ENCODE measurements at regions of chr6 and their contacts with region 1.

Region 1: DNA sequence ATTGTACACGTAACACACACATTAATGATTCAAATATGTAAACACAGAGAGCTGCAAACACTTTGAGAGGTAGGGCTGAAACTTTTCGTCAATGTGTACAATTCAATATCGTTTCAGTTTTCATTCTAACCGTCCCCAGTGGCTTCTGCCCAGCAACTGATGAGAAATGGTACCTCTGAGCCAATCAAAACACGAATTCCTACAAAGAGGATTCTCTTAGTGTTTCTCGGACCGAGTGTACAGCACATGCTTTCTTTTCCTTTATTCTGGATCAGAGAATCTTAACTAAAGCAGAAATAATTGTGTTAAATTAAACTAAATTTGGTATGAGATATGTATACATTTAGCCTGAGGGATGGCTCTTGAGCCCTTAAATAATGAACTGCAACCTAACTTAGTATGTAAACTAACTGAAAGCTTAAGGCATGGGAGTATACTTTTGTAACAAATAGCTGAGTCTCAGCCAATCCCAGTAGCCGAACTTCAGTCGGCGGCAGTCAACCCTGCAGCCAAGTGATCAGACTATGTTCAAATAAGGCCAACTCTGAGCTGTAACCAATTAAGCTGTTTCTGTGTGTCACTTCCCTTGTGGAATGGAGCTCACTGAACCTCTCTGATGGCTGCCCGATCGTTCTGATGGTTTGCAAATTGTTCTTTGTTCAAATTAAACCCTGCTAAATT is 16.1 kb downstream of the BTN2A1 start:
- DNase-seq: peak; percentile 63 to 96 (median 79)
- ATAC-seq: peak; percentile 93
- H3K4me3 ChIP-seq: peak overlapping the region; percentile 64 to 75
- H3K4me3 Mint-ChIP-seq: peak overlapping the region; percentile 93
- H3K27ac ChIP-seq: peak overlapping the region; percentile 82 to 98
- H3K27ac Mint-ChIP-seq: peak overlapping the region; percentile 99
- H3K4me1 ChIP-seq: peaks cover 39% of the 10 kb centered on the region
- H3K4me1 Mint-ChIP-seq: peaks cover 50% of the 10 kb centered on the region
- H3K27me3 ChIP-seq: no peaks in the 10 kb centered on the region
- H3K27me3 Mint-ChIP-seq: no peaks in the 10 kb centered on the region
- CTCF ChIP-seq: no peak

Region 2: DNA sequence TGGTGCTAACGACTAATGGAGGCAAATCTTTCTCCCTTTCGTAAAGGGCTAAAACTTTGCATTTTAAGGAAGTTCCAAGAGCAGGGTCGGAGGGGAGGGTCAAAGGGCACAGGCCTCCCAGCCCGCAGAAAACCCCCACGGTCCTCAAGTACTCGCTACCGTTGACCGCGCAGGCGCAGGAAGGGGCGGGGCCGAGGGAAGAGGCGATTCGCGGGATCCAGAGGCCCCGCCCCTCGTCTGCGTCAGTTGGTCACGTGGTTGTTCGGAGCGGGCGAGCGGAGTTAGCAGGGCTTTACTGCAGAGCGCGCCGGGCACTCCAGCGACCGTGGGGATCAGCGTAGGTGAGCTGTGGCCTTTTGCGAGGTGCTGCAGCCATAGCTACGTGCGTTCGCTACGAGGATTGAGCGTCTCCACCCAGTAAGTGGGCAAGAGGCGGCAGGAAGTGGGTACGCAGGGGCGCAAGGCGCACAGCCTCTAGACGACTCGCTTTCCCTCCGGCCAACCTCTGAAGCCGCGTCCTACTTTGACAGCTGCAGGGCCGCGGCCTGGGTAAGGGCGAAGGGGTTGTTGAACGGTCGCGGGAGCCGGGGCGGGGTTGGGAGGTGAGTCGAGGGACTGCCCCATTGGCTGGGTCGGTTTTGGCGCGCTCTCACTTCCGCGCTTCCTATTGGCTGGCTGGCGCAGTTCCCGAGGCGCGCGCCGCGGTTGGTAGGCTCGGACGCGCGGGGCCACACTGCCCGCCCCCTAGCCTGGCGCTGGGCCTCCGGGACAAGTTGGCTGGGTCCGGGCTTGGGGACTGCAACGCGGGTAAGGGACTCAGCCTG is 1699.0 kb before region 1 on chr6 and contains the start of gene GMNN:
- CTCF ChIA-PET with region 1: no interaction called
- POLR2A ChIA-PET with region 1: no interaction called
- intact Hi-C with region 1: no loop called
- DNase-seq: peak; percentile 93 to 99 (median 98)
- ATAC-seq: peak; percentile 86
- H3K4me3 ChIP-seq: peak within 1 kb of the TSS; percentile 86 to 94
- H3K4me3 Mint-ChIP-seq: peak within 1 kb of the TSS; percentile 99
- H3K27ac ChIP-seq: peak within 1 kb of the TSS; percentile 83 to 85
- H3K27ac Mint-ChIP-seq: peak within 1 kb of the TSS; percentile 97
- H3K4me1 ChIP-seq: peaks cover 14% of the 10 kb centered on the region
- H3K4me1 Mint-ChIP-seq: peaks cover 22% of the 10 kb centered on the region
- H3K27me3 ChIP-seq: no peaks in the 10 kb centered on the region
- H3K27me3 Mint-ChIP-seq: no peaks in the 10 kb centered on the region
- CTCF ChIP-seq: no peak
- total RNA-seq, gene GMNN: 14.1 to 14.4 TPM

Region 3: GRCh38 chr6:25524542-25524941 is 949.4 kb before region 1 on chr6:
- CTCF ChIA-PET with region 1: no interaction called
- POLR2A ChIA-PET with region 1: no interaction called
- intact Hi-C with region 1: no loop called
- DNase-seq: no peak
- ATAC-seq: no peak
- H3K4me3 ChIP-seq: no peak overlapping the region
- H3K4me3 Mint-ChIP-seq: no peak overlapping the region
- H3K27ac ChIP-seq: no peak overlapping the region
- H3K27ac Mint-ChIP-seq: no peak overlapping the region
- H3K4me1 ChIP-seq: no peaks in the 10 kb centered on the region
- H3K4me1 Mint-ChIP-seq: no peaks in the 10 kb centered on the region
- H3K27me3 ChIP-seq: no peaks in the 10 kb centered on the region
- H3K27me3 Mint-ChIP-seq: no peaks in the 10 kb centered on the region
- CTCF ChIP-seq: no peak

Region 4: DNA sequence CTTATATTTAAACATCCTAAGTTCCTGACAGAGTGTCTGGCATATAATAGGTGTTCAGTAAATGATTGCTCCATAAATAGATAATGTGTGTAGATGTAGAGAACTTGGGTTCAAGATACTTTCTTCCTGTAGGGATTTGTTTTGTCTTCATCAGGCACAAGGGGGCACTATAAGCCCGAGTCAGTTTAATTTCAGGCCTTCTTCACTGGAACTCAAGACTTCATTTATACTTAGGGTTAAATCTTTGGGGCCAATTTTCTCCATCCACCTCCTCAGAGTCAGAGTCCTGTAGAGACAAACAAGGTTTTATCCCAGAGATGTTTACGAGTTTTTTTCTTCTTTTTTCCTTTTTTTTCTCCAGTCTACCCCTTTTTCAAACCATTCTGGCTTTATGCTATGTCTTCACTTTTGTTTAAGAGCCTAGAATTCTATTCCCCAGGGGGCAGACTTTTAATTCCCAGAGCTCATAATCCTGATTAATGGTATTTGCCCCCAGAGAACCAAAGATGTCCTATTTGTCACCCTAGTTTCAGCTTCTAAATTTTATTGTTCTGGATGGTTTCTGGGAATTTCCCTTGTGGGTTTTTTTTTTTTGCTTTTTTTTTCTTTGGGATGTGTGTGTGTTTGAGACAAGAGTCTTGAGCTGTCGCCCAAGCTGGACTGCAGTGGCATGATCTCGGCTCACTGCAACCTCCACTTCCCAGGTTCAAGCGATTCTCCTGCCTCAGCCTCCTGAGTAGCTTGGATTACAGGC is 298.3 kb before region 1 on chr6:
- CTCF ChIA-PET with region 1: no interaction called
- POLR2A ChIA-PET with region 1: no interaction called
- intact Hi-C with region 1: loop called in 1 of 2 experiments (anchors 5 kb)
- DNase-seq: peak in 7 of 9 experiments; percentile 33 to 87 (median 53)
- ATAC-seq: no peak
- H3K4me3 ChIP-seq: no peak overlapping the region
- H3K4me3 Mint-ChIP-seq: peak overlapping the region; percentile 3
- H3K27ac ChIP-seq: no peak overlapping the region
- H3K27ac Mint-ChIP-seq: peak overlapping the region; percentile 63
- H3K4me1 ChIP-seq: peaks cover 26% of the 10 kb centered on the region
- H3K4me1 Mint-ChIP-seq: peaks cover 39% of the 10 kb centered on the region
- H3K27me3 ChIP-seq: no peaks in the 10 kb centered on the region
- H3K27me3 Mint-ChIP-seq: no peaks in the 10 kb centered on the region
- CTCF ChIP-seq: peak; percentile 93

Region 5: DNA sequence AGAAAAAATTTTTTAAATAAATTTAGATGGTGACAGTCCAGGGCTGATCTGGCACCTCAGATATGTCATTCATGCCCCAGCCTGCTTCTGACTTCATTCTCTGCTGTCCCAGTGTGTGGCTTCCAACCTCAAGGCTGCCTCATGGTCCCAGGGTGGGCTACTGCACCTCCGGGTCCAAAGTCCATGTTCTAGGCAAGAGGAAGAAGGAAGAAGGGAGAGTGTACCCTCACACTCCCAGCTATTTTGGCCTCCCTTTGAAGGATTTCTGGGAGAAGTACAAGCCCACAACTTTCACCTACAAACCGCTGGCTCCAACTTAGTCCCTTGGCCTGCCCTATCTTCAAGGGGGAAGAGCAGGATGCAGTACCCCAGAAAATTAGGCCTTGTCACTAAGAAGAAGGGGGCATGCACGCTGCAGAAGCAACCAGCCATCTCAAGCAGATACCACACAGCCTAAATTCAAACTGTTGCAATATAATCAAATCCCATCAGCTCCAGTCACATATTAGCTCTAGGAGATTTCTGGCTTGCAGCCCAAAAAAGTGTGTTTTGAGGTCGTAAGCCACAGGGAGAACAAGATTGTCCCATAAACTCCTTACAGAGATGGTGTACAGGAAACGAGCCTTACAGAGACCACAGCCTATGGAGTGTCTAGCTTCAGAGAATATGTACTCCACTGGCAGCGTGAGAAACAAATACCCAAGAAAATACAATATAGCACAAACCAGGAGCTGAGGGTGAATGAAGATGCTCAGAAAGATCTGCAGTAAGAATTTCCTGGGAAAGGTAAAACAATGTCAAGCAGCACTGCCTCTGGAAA is 109.8 kb before region 1 on chr6:
- CTCF ChIA-PET with region 1: no interaction called
- POLR2A ChIA-PET with region 1: interaction called, 6 read pairs
- intact Hi-C with region 1: loop called in 1 of 2 experiments (anchors 2 kb)
- DNase-seq: peak in 6 of 9 experiments; percentile 9 to 69 (median 34)
- ATAC-seq: no peak
- H3K4me3 ChIP-seq: peak overlapping the region; percentile 90 to 92
- H3K4me3 Mint-ChIP-seq: no peak overlapping the region
- H3K27ac ChIP-seq: peak overlapping the region; percentile 95
- H3K27ac Mint-ChIP-seq: no peak overlapping the region
- H3K4me1 ChIP-seq: peaks cover 51% of the 10 kb centered on the region
- H3K4me1 Mint-ChIP-seq: peaks cover 53% of the 10 kb centered on the region
- H3K27me3 ChIP-seq: no peaks in the 10 kb centered on the region
- H3K27me3 Mint-ChIP-seq: no peaks in the 10 kb centered on the region
- CTCF ChIP-seq: no peak

Region 6: DNA sequence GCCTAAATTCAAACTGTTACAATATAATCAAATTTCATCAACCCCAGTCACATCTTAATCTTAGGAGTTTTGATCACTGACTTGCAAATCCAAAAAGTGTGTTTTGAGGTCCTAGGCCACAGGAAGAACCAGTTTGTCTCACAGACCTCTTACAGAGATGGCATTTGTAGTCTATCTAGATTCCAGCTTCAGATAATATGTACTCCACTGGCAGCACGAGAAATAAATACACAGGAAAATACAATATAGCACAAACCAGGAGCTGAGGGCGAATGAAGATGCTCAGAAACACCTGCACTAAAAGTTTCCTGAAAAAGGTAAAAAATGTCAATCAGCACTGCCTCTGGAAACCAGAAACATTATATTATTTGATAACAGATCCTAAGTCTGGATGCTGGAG is 34.2 kb before region 1 on chr6:
- CTCF ChIA-PET with region 1: no interaction called
- POLR2A ChIA-PET with region 1: interaction called, 4 read pairs
- intact Hi-C with region 1: loop called (anchors 1 kb)
- DNase-seq: peak in 2 of 9 experiments; percentile 20 to 48
- ATAC-seq: no peak
- H3K4me3 ChIP-seq: peak overlapping the region; percentile 84 to 91
- H3K4me3 Mint-ChIP-seq: peak overlapping the region; percentile 100
- H3K27ac ChIP-seq: peak overlapping the region; percentile 95 to 98
- H3K27ac Mint-ChIP-seq: peak overlapping the region; percentile 100
- H3K4me1 ChIP-seq: peaks cover 23% of the 10 kb centered on the region
- H3K4me1 Mint-ChIP-seq: peaks cover 44% of the 10 kb centered on the region
- H3K27me3 ChIP-seq: no peaks in the 10 kb centered on the region
- H3K27me3 Mint-ChIP-seq: no peaks in the 10 kb centered on the region
- CTCF ChIP-seq: no peak

Region 7: DNA sequence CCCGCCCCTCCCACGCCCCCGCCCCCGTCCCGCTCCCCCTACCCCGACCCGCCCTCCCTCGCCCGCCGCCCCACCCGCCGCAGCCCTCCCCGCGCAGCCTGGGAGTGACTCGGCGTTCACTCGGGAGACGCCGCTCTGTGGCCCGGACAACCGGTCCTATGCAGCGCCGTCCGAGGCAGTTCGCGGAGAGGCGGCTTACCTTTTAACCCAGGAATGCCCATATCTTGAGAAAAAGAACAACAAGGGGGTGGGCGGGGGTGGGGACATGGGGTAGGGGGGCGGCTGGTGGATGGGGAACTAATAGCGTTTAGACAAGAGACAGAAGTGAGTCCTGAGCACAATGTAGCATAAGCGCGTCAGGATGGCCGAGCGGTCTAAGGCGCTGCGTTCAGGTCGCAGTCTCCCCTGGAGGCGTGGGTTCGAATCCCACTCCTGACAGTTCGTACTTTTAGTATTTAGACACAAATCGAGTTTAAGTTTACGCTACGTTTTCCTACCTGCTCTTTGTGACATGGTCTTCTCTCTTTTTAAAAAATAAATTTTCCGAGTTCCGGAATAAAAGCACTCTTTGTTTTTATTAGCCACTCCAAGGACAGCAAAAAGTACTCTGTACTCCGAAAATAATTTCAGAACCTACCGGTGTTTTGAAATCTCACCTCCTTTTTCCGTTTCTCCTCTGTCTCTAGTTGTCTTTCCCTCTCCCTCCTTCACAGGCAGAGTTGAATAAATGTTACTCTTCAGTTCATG is 47.1 kb after region 1 on chr6:
- CTCF ChIA-PET with region 1: interaction called, 3 read pairs
- POLR2A ChIA-PET with region 1: interaction called, 19 read pairs
- intact Hi-C with region 1: loop called (anchors 1 kb)
- DNase-seq: peak; percentile 69 to 94 (median 86)
- ATAC-seq: peak; percentile 80
- H3K4me3 ChIP-seq: peak overlapping the region; percentile 50 to 57
- H3K4me3 Mint-ChIP-seq: peak overlapping the region; percentile 83
- H3K27ac ChIP-seq: peak overlapping the region; percentile 35 to 86
- H3K27ac Mint-ChIP-seq: peak overlapping the region; percentile 83
- H3K4me1 ChIP-seq: peaks cover 8% of the 10 kb centered on the region
- H3K4me1 Mint-ChIP-seq: peaks cover 31% of the 10 kb centered on the region
- H3K27me3 ChIP-seq: no peaks in the 10 kb centered on the region
- H3K27me3 Mint-ChIP-seq: no peaks in the 10 kb centered on the region
- CTCF ChIP-seq: no peak

Region 8: DNA sequence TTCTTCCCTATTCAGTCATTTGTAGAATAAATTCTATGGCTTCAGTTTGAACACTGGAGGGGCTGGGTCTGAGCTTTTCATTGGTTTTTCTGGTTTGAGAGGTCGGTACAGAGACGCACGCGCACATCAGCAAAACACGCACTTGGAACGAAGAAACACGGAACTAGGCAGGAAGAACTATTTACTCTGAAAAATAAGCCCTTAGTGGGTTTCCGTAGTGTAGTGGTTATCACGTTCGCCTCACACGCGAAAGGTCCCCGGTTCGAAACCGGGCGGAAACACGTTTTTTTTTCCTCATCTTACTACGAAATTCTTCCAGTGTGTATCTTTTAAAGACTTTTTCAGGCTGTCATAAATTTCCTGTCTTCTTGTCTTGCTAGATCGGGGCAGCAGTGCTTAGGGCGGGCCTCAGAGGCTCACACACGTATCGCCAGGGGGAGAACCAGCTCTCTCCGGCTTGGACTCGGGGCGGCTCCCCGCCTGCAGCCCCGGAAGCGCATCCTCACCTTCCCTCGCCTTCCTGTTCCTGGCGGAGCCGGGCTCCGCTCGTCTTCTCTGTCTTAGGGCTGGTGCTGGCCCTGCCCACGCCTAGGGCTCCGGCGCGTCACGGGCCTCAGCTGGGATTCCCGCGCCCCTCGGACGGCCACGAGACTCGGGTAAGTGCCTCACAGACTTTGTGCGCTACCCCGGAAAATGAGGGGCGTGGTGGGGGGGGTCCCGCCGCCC is 64.1 kb after region 1 on chr6 and contains the start of gene HMGN4:
- CTCF ChIA-PET with region 1: interaction called, 4 read pairs
- POLR2A ChIA-PET with region 1: interaction called, 36 read pairs
- intact Hi-C with region 1: loop called (anchors 1 to 2 kb)
- DNase-seq: peak; percentile 65 to 96 (median 79)
- ATAC-seq: peak; percentile 69
- H3K4me3 ChIP-seq: peak within 1 kb of the TSS; percentile 66 to 99
- H3K4me3 Mint-ChIP-seq: peak within 1 kb of the TSS; percentile 89
- H3K27ac ChIP-seq: peak within 1 kb of the TSS; percentile 88 to 93
- H3K27ac Mint-ChIP-seq: peak within 1 kb of the TSS; percentile 92
- H3K4me1 ChIP-seq: peaks cover 32% of the 10 kb centered on the region
- H3K4me1 Mint-ChIP-seq: peaks cover 58% of the 10 kb centered on the region
- H3K27me3 ChIP-seq: no peaks in the 10 kb centered on the region
- H3K27me3 Mint-ChIP-seq: no peaks in the 10 kb centered on the region
- CTCF ChIP-seq: no peak
- total RNA-seq, gene HMGN4: 24.8 to 33.7 TPM

Measured in CD8-positive, alpha-beta T cell (primary cell).